BJ (cell line): ENCODE measurements at regions of chr1 and their contacts with region 1.

Region 1: DNA sequence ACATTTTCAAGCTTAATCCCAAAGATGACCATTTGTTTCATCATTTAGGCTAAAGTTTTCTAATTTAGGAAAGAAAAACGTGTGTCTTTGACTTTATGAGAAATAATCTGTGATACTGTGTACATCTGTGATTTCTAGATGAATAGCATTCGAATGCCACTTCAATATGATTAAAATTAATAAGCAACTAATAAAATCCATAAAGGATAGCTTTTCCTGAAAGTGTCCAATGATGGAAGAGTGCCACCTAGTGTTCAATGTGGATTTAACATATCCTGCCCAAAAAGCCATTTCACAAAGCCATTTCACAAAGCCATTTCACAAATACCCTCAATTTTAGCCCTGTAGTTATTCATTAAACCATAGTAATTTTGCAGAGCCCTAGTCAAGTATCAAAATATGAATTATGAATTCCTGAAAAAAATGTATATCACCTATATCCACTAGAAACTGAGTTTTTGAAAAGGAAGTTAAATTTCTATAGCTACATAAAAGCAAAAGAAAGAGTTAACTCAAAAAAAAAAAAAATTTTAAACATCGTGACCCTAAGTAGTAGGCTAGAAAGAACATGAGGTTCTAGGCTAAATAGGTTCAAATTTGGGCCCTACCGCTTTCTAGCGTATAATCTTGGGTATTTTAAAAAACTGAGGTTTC is 19.1 kb downstream of the NME7 start:
- DNase-seq: no peak
- H3K4me3 ChIP-seq: no peak overlapping the region
- H3K27me3 ChIP-seq: no peaks in the 10 kb centered on the region
- CTCF ChIP-seq: peak; percentile 66

Region 2: GRCh38 chr1:168342572-168343280 is 1005.8 kb before region 1 on chr1:
- CTCF ChIA-PET with region 1: interaction called, 14 read pairs
- POLR2A ChIA-PET with region 1: no interaction called
- DNase-seq: peak; percentile 66
- H3K4me3 ChIP-seq: peak overlapping the region; percentile 14; the same call in 1 of the 2 replicates
- H3K27me3 ChIP-seq: no peaks in the 10 kb centered on the region
- CTCF ChIP-seq: peak; percentile 84

Region 3: GRCh38 chr1:168603501-168604110 is 744.9 kb before region 1 on chr1:
- CTCF ChIA-PET with region 1: interaction called, 52 read pairs
- POLR2A ChIA-PET with region 1: no interaction called
- DNase-seq: no peak
- H3K4me3 ChIP-seq: no peak overlapping the region
- H3K27me3 ChIP-seq: no peaks in the 10 kb centered on the region
- CTCF ChIP-seq: peak; percentile 81

Region 4: GRCh38 chr1:168637350-168637991 is 711.0 kb before region 1 on chr1:
- CTCF ChIA-PET with region 1: interaction called, 11 read pairs
- POLR2A ChIA-PET with region 1: no interaction called
- DNase-seq: no peak
- H3K4me3 ChIP-seq: no peak overlapping the region
- H3K27me3 ChIP-seq: no peaks in the 10 kb centered on the region
- CTCF ChIP-seq: peak; percentile 59

Region 5: GRCh38 chr1:169106095-169106920 is 242.2 kb before region 1 on chr1 and contains the start of gene ATP1B1:
- CTCF ChIA-PET with region 1: interaction called, 11 read pairs
- POLR2A ChIA-PET with region 1: interaction called, 4 read pairs
- DNase-seq: no peak
- H3K4me3 ChIP-seq: peak within 1 kb of the TSS; percentile 75
- H3K27me3 ChIP-seq: peaks cover 4% of the 10 kb centered on the region
- CTCF ChIP-seq: peak; percentile 27; the same call in 1 of the 2 replicates
- polyA plus RNA-seq, gene ATP1B1: 10.5 and 18.8 TPM in 2 replicates

Region 6: GRCh38 chr1:169295425-169295824 is 53.1 kb before region 1 on chr1:
- CTCF ChIA-PET with region 1: no interaction called
- POLR2A ChIA-PET with region 1: no interaction called
- DNase-seq: no peak
- H3K4me3 ChIP-seq: no peak overlapping the region
- H3K27me3 ChIP-seq: no peaks in the 10 kb centered on the region
- CTCF ChIP-seq: no peak